A673 (cell line): ENCODE measurements at regions of chr20 and their contacts with region 1.

Region 1: GRCh38 chr20:25076731-25077609 is 5.0 kb downstream of the VSX1 start:
- DNase-seq: no peak
- H3K4me3 ChIP-seq: no peak overlapping the region
- H3K27ac ChIP-seq: no peak overlapping the region
- H3K4me1 ChIP-seq: no peaks in the 10 kb centered on the region
- H3K27me3 ChIP-seq: peaks cover 99% of the 10 kb centered on the region
- CTCF ChIP-seq: peak; percentile 30; the same call in 1 of the 2 replicates

Region 2: DNA sequence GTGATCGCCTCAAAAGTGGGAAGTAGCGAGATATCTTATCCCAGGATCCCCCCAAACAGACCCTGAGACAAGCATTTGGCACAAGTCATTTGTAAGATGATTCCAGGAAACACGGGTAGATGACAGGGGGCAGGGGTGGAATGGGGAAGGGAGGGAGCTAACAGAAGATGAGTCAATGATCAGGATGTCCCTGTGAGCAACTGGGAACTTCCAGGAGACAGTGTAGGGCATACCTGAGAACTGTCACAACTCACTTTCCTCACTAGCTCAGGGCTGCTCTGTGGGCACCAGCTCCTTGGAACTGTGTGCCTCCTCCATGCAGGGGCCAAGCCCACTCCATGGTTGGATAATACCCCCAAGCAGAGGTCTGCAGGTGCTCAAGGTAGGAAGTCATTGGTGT is 43.5 kb after region 1 on chr20:
- CTCF ChIA-PET with region 1: no interaction called
- POLR2A ChIA-PET with region 1: no interaction called
- intact Hi-C with region 1: loop called (anchors 5 kb)
- DNase-seq: no peak
- H3K4me3 ChIP-seq: no peak overlapping the region
- H3K27ac ChIP-seq: no peak overlapping the region
- H3K4me1 ChIP-seq: no peaks in the 10 kb centered on the region
- H3K27me3 ChIP-seq: peaks cover 60% of the 10 kb centered on the region
- CTCF ChIP-seq: no peak

Region 3: GRCh38 chr20:25150016-25150415 is 73.0 kb after region 1 on chr20:
- CTCF ChIA-PET with region 1: no interaction called
- POLR2A ChIA-PET with region 1: no interaction called
- intact Hi-C with region 1: loop called (anchors 10 kb)
- DNase-seq: no peak
- H3K4me3 ChIP-seq: no peak overlapping the region
- H3K27ac ChIP-seq: no peak overlapping the region
- H3K4me1 ChIP-seq: peaks cover 9% of the 10 kb centered on the region
- H3K27me3 ChIP-seq: peaks cover 23% of the 10 kb centered on the region
- CTCF ChIP-seq: no peak

Region 4: GRCh38 chr20:25178563-25179438 is 101.8 kb after region 1 on chr20:
- CTCF ChIA-PET with region 1: no interaction called
- POLR2A ChIA-PET with region 1: no interaction called
- intact Hi-C with region 1: loop called (anchors 5 kb)
- DNase-seq: peak; percentile 49
- H3K4me3 ChIP-seq: no peak overlapping the region
- H3K27ac ChIP-seq: no peak overlapping the region
- H3K4me1 ChIP-seq: no peaks in the 10 kb centered on the region
- H3K27me3 ChIP-seq: peaks cover 4% of the 10 kb centered on the region
- CTCF ChIP-seq: peak; percentile 81

Region 5: DNA sequence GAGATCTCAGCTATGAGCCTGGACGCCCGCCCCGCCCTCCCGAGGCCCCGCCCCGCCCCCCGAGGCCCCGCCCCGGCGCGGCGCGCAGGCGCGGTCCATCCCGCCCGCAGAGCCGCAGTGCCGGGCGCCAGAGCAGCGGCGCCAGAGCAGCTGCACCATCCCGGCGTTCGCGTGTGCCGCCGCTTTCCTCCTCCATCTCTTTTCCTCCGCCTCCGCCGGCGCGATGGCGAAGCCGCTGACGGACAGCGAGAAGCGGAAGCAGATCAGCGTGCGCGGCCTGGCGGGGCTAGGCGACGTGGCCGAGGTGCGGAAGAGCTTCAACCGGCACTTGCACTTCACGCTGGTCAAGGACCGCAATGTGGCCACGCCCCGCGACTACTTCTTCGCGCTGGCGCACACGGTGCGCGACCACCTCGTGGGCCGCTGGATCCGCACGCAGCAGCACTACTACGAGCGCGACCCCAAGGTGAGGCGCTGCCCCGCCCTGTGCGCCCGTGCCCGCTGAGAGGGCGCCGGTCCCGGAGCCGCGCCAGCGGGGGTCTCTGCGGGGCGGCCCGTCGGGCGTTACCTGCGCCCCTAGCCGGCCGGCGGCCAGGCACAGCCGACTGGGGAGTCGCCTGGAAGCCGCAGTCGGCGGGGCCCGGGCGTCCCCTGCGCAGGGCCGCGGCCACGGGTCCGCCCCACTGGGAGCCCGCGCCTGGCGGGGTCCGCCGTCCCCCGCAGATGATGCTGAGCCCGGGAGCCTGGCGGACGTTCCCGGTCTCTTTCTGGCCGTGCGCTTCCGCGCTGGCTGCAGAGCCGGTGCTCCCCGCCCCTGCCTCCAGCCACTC is 171.2 kb after region 1 on chr20 and contains the start of gene PYGB:
- CTCF ChIA-PET with region 1: no interaction called
- POLR2A ChIA-PET with region 1: no interaction called
- intact Hi-C with region 1: loop called (anchors 5 kb)
- DNase-seq: peak; percentile 87
- H3K4me3 ChIP-seq: peak within 1 kb of the TSS; percentile 94
- H3K27ac ChIP-seq: peak within 1 kb of the TSS; percentile 71
- H3K4me1 ChIP-seq: peaks cover 9% of the 10 kb centered on the region
- H3K27me3 ChIP-seq: no peaks in the 10 kb centered on the region
- CTCF ChIP-seq: no peak
- total RNA-seq, gene PYGB: 52.3 and 53.5 TPM in 2 replicates

Region 6: DNA sequence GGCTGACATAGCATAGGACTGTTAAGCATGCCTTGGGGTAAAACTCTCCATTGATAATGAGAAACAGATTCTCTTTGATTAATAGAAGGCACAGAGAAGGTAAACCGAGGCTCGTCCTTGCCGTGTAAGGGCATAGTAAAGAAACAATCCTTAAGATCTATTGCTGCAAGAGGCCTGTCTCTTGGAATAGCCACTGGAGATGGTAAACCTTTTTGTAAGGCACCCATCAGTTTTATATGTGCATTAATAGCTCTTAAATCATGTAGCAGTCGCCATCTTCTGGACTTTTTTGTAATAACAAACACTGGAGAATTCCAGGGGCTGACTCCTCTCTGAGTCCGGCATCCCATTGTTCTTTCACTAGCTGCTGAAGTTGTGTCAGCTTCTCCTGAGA is 322.1 kb after region 1 on chr20:
- CTCF ChIA-PET with region 1: no interaction called
- POLR2A ChIA-PET with region 1: no interaction called
- intact Hi-C with region 1: loop called (anchors 5 kb)
- DNase-seq: peak; percentile 81
- H3K4me3 ChIP-seq: no peak overlapping the region
- H3K27ac ChIP-seq: no peak overlapping the region
- H3K4me1 ChIP-seq: no peaks in the 10 kb centered on the region
- H3K27me3 ChIP-seq: no peaks in the 10 kb centered on the region
- CTCF ChIP-seq: peak; percentile 67

Region 7: GRCh38 chr20:25532119-25532751 is 455.3 kb after region 1 on chr20:
- CTCF ChIA-PET with region 1: no interaction called
- POLR2A ChIA-PET with region 1: no interaction called
- intact Hi-C with region 1: no loop called
- DNase-seq: no peak
- H3K4me3 ChIP-seq: no peak overlapping the region
- H3K27ac ChIP-seq: no peak overlapping the region
- H3K4me1 ChIP-seq: no peaks in the 10 kb centered on the region
- H3K27me3 ChIP-seq: no peaks in the 10 kb centered on the region
- CTCF ChIP-seq: no peak